ENCODE measurements at regions of chr6 and their contacts with region 1.

Region 1: DNA sequence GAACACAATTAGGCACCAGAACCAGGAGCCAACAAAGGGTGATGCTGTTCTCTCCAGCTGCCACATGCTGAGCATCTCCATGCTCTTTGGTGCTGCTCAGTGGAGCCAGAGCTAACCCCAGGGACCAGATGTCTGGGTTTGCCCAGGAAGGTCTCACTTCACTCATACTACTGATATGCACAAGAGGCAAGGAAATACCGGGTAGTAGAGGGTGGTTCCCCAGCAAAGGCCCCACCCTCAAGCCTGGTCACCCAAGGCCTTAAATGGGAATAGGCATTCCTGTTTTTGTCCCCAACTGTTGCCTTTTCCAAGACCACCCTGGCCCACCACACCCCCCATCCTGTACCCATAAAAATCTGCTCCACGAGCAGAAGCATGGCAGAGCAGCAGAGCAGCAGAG is 204.5 kb upstream of the TAB2 start:
- DNase-seq: no peak
- ATAC-seq: peak; percentile 82
- H3K4me3 ChIP-seq: no peak overlapping the region
- H3K27ac ChIP-seq: peak overlapping the region; percentile 74
- H3K4me1 ChIP-seq: peaks cover 50% of the 10 kb centered on the region
- H3K27me3 ChIP-seq: no peaks in the 10 kb centered on the region
- CTCF ChIP-seq: no peak
- EP300 ChIP-seq: no peak
- POLR2A ChIP-seq: no peak
- RAD21 ChIP-seq: no peak

Region 2: GRCh38 chr6:149054559-149055194 is 58.3 kb before region 1 on chr6:
- CTCF ChIA-PET with region 1: no interaction called
- POLR2A ChIA-PET with region 1: no interaction called
- RAD21 ChIA-PET with region 1: interaction called, 5 read pairs
- SMC1A ChIA-PET with region 1: interaction called, 10 read pairs
- in situ Hi-C with region 1: no loop called
- intact Hi-C with region 1: no loop called
- DNase-seq: peak; percentile 86
- ATAC-seq: peak; percentile 85
- H3K4me3 ChIP-seq: peak overlapping the region; percentile 53; the same call in 1 of the 2 replicates
- H3K27ac ChIP-seq: peak overlapping the region; percentile 90
- H3K4me1 ChIP-seq: peaks cover 37% of the 10 kb centered on the region
- H3K27me3 ChIP-seq: no peaks in the 10 kb centered on the region
- CTCF ChIP-seq: no peak
- EP300 ChIP-seq: no peak
- POLR2A ChIP-seq: no peak
- RAD21 ChIP-seq: no peak

Region 3: GRCh38 chr6:149075616-149076364 is 37.2 kb before region 1 on chr6:
- CTCF ChIA-PET with region 1: interaction called, 11 read pairs
- POLR2A ChIA-PET with region 1: no interaction called
- RAD21 ChIA-PET with region 1: interaction called, 11 read pairs
- SMC1A ChIA-PET with region 1: interaction called, 13 read pairs
- in situ Hi-C with region 1: no loop called
- intact Hi-C with region 1: no loop called
- DNase-seq: no peak
- ATAC-seq: no peak
- H3K4me3 ChIP-seq: no peak overlapping the region
- H3K27ac ChIP-seq: no peak overlapping the region
- H3K4me1 ChIP-seq: peaks cover 31% of the 10 kb centered on the region
- H3K27me3 ChIP-seq: no peaks in the 10 kb centered on the region
- CTCF ChIP-seq: no peak
- EP300 ChIP-seq: no peak
- POLR2A ChIP-seq: no peak
- RAD21 ChIP-seq: no peak

Region 4: DNA sequence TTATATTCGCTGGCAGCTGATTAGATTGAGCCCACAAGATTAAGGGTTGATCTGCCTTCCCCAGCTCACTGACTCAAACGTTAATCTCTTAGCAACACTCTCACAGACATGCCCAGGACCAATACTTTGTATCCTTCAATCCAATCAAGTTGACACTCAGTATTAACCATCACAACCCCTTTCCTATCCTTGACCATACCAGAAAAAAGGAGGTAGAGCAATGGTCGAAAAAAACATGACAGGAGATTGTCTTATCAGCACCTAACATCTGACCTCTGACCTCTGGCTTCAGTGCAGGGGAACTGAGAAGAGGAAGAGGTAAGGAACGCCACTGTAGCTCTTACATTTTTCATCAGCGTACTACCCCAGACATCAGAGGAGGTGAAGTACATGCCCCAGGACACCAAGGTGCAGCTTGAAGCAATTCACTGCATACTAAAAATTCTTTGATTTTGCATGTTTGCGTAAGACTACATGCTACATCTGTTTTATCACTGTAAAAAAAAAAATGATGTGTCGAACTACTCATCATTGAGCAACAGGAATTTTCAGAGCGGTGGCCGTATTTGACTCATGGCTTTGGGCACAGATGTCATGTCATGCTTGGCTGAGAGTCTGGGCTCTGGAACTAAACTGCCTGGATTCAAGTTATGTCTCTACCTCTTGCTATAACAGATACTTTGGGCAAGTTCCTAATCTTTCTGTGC is 16.5 kb after region 1 on chr6:
- CTCF ChIA-PET with region 1: interaction called, 4 read pairs
- POLR2A ChIA-PET with region 1: no interaction called
- RAD21 ChIA-PET with region 1: interaction called, 4 read pairs
- SMC1A ChIA-PET with region 1: interaction called, 30 read pairs
- in situ Hi-C with region 1: no loop called
- intact Hi-C with region 1: no loop called
- DNase-seq: no peak
- ATAC-seq: peak; percentile 94
- H3K4me3 ChIP-seq: no peak overlapping the region
- H3K27ac ChIP-seq: no peak overlapping the region
- H3K4me1 ChIP-seq: peaks cover 15% of the 10 kb centered on the region
- H3K27me3 ChIP-seq: no peaks in the 10 kb centered on the region
- CTCF ChIP-seq: no peak
- EP300 ChIP-seq: peak in 1 of 2 experiments; percentile 37; a peak in 1 of 4 replicates
- POLR2A ChIP-seq: no peak
- RAD21 ChIP-seq: no peak

Region 5: GRCh38 chr6:149229096-149229495 is 116.1 kb after region 1 on chr6:
- CTCF ChIA-PET with region 1: no interaction called
- POLR2A ChIA-PET with region 1: no interaction called
- RAD21 ChIA-PET with region 1: no interaction called
- SMC1A ChIA-PET with region 1: no interaction called
- in situ Hi-C with region 1: no loop called
- intact Hi-C with region 1: no loop called
- DNase-seq: no peak
- ATAC-seq: no peak
- H3K4me3 ChIP-seq: no peak overlapping the region
- H3K27ac ChIP-seq: no peak overlapping the region
- H3K4me1 ChIP-seq: peaks cover 22% of the 10 kb centered on the region
- H3K27me3 ChIP-seq: no peaks in the 10 kb centered on the region
- CTCF ChIP-seq: no peak
- EP300 ChIP-seq: no peak
- POLR2A ChIP-seq: no peak
- RAD21 ChIP-seq: no peak